Panc1 (cell line): ENCODE measurements at regions of chr10 and their contacts with region 1.

Region 1: DNA sequence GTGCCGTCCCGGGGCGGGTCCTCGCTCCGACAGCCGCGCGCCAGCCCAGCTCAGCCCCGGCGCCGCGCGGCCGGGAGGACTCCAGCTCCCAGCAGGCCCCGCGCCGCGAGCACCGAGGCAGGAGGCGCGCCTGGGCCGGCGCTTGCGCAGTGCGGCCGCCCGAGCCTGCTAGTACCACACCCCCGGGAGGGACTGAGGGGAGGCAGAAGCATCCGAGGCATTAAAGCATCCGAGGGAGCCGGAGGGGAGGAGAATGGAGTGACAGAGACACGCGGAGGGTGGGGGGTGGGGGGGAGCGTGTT is at the start of gene GRK5:
- DNase-seq: peak; percentile 74
- ATAC-seq: peak; percentile 91
- H3K4me3 ChIP-seq: peak within 1 kb of the TSS; percentile 80 to 94
- H3K27ac ChIP-seq: peak within 1 kb of the TSS; percentile 90
- H3K4me1 ChIP-seq: peaks cover 42% of the 10 kb centered on the region
- H3K27me3 ChIP-seq: no peaks in the 10 kb centered on the region
- CTCF ChIP-seq: no peak
- total RNA-seq, gene GRK5: 29.0 TPM

Region 2: DNA sequence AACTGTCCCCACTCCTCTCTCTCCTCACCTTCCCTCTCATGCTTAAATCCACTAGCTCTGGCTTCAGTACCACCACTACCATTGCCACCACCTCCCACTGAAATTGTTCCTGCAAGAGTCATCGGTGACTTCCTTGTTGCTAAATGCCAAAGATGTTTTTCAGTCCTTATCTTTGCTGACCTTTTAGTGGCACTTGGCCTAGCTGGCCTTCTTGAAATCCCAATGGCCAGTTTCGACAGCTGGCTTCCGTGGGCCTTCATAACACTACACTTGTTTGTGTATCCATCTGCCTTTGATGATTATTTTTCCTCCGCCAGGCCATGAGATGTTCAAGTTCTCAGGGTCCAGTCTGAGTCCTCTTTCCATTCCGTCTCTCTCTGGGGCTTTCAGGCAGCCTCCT is 296.0 kb before region 1 on chr10:
- CTCF ChIA-PET with region 1: no interaction called
- POLR2A ChIA-PET with region 1: no interaction called
- in situ Hi-C with region 1: no loop called
- intact Hi-C with region 1: no loop called
- DNase-seq: no peak
- ATAC-seq: no peak
- H3K4me3 ChIP-seq: no peak overlapping the region
- H3K27ac ChIP-seq: no peak overlapping the region
- H3K4me1 ChIP-seq: peaks cover 6% of the 10 kb centered on the region; the same call in 1 of the 2 replicates
- H3K27me3 ChIP-seq: no peaks in the 10 kb centered on the region
- CTCF ChIP-seq: no peak

Region 3: DNA sequence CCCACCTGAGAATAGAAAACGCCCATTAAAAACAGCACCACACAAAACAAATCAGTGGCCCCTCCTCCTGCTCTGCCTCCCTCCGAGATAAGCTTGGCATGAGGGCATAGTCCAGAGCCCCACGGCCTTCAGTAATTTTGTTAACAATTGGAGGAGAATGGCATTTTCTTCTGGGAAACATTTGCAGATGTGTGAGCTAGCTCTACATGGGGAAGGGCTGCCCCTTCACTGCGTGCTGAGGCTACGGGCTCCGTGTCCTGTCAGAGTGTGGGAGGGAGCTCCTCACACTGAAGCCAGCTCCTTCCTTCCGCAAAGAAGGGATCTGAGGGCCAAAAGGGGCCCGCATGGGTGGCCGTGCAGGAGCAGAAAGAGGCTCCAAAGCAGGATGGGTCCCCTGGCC is 15.2 kb after region 1 on chr10:
- CTCF ChIA-PET with region 1: interaction called, 11 read pairs
- POLR2A ChIA-PET with region 1: interaction called, 4 read pairs
- in situ Hi-C with region 1: no loop called
- intact Hi-C with region 1: no loop called
- DNase-seq: no peak
- ATAC-seq: peak; percentile 83
- H3K4me3 ChIP-seq: peak overlapping the region; percentile 1 to 26; a peak in 1 of 4 replicates
- H3K27ac ChIP-seq: peak overlapping the region; percentile 65
- H3K4me1 ChIP-seq: peaks cover 37% of the 10 kb centered on the region
- H3K27me3 ChIP-seq: no peaks in the 10 kb centered on the region
- CTCF ChIP-seq: no peak

Region 4: DNA sequence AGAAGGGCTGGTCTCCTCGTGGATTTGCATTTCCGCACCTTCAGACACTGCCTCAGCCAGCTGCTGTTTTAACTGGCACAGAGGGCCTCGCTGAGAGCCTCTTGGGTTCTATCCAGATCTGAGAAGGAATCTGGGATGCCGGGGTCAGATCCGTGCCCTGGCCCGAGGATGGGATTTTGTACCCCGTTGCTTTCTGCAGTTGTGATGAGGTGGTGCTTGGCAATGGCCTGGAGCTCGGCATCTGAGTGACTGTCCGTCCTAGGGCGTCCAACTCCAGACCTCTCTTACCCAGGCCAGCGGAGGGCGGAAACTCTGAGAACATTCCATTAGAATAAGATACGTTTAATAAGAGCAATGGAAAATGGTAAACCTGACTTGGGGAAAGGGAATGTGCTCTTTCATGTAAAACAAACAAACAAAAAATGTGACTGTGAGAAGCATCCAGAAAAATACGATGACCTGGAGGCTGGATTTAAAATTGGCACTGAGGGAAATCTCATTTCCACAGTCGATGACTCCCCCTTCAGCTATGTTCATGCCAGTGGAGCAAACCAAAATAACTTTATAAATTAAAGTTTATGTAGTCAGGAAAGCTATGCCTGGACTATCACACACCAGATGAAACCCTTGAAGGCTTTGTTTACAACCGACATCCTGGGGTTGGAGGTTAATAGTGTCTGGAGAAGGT is 39.7 kb after region 1 on chr10:
- CTCF ChIA-PET with region 1: interaction called, 17 read pairs
- POLR2A ChIA-PET with region 1: interaction called, 5 read pairs
- in situ Hi-C with region 1: no loop called
- intact Hi-C with region 1: loop called (anchors 5 kb)
- DNase-seq: no peak
- ATAC-seq: peak; percentile 76
- H3K4me3 ChIP-seq: peak overlapping the region; percentile 9 to 25; a peak in 3 of 4 replicates
- H3K27ac ChIP-seq: peak overlapping the region; percentile 87
- H3K4me1 ChIP-seq: peaks cover 54% of the 10 kb centered on the region
- H3K27me3 ChIP-seq: no peaks in the 10 kb centered on the region
- CTCF ChIP-seq: no peak

Region 5: GRCh38 chr10:119253433-119254174 is 46.3 kb after region 1 on chr10:
- CTCF ChIA-PET with region 1: interaction called, 11 read pairs
- POLR2A ChIA-PET with region 1: no interaction called
- in situ Hi-C with region 1: no loop called
- intact Hi-C with region 1: loop called (anchors 5 kb)
- DNase-seq: peak; percentile 92
- ATAC-seq: peak; percentile 72
- H3K4me3 ChIP-seq: peak overlapping the region in 1 of 2 experiments; percentile 2; a peak in 2 of 4 replicates
- H3K27ac ChIP-seq: peak overlapping the region; percentile 93
- H3K4me1 ChIP-seq: peaks cover 66% of the 10 kb centered on the region
- H3K27me3 ChIP-seq: no peaks in the 10 kb centered on the region
- CTCF ChIP-seq: no peak

Region 6: DNA sequence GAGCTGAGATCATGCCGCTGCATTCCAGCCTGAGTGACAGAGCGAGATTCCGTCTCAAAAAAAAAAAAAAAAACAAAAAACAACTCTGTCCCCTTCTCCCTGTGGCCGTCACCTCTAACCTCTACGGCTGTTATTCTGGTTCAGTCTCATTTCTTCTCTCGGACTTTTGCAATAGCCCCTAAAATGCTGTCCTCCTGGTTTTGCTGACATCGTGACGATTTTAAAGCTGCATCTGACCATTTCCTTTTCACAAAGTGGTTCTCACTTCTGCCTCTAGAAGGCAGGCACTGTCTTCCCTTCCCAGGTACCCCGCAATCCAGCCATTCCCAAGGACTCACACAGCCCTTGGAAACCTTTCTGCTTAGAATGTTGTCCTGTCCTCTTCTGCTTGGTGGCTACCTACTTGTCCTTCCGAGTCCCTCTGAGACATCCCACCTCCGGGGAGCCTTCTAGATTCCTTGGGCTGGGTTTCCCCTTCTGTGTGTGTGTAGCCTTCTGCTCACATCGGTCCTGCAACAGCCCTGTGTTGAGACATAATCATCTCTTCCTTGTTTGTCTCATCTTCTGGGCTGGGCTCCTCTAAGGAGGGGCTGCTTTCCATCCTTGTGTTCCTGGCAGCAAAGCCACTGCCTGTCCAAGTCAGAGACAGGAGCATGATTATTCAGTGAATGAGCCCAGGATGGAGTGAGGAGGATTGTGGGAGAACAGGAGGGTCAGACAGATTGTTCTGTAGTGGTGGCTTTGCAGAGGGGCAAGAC is 83.2 kb after region 1 on chr10:
- CTCF ChIA-PET with region 1: interaction called, 3 read pairs
- POLR2A ChIA-PET with region 1: no interaction called
- in situ Hi-C with region 1: no loop called
- intact Hi-C with region 1: loop called (anchors 5 kb)
- DNase-seq: no peak
- ATAC-seq: peak; percentile 43
- H3K4me3 ChIP-seq: no peak overlapping the region
- H3K27ac ChIP-seq: peak overlapping the region; percentile 39; the same call in 1 of the 2 replicates
- H3K4me1 ChIP-seq: peaks cover 48% of the 10 kb centered on the region
- H3K27me3 ChIP-seq: no peaks in the 10 kb centered on the region
- CTCF ChIP-seq: no peak

Region 7: GRCh38 chr10:119416855-119417254 is 209.5 kb after region 1 on chr10:
- CTCF ChIA-PET with region 1: interaction called, 4 read pairs
- POLR2A ChIA-PET with region 1: interaction called, 3 read pairs
- in situ Hi-C with region 1: no loop called
- intact Hi-C with region 1: loop called (anchors 2 kb)
- DNase-seq: peak; percentile 32
- ATAC-seq: peak; percentile 86
- H3K4me3 ChIP-seq: no peak overlapping the region
- H3K27ac ChIP-seq: no peak overlapping the region
- H3K4me1 ChIP-seq: 0 out of 2 replicates have a peak, but pooled peaks cover 3% of the 10 kb centered on the region
- H3K27me3 ChIP-seq: no peaks in the 10 kb centered on the region
- CTCF ChIP-seq: peak; percentile 94

Region 8: GRCh38 chr10:119489991-119490326 is 282.6 kb after region 1 on chr10:
- CTCF ChIA-PET with region 1: interaction called, 20 read pairs
- POLR2A ChIA-PET with region 1: no interaction called
- in situ Hi-C with region 1: no loop called
- intact Hi-C with region 1: no loop called
- DNase-seq: no peak
- ATAC-seq: peak; percentile 41
- H3K4me3 ChIP-seq: peak overlapping the region; percentile 38 to 57
- H3K27ac ChIP-seq: no peak overlapping the region
- H3K4me1 ChIP-seq: peaks cover 14% of the 10 kb centered on the region
- H3K27me3 ChIP-seq: no peaks in the 10 kb centered on the region
- CTCF ChIP-seq: no peak; the same call in 1 of the 2 replicates